ENCODE measurements at regions of chr5 and their contacts with region 1.

Region 1: DNA sequence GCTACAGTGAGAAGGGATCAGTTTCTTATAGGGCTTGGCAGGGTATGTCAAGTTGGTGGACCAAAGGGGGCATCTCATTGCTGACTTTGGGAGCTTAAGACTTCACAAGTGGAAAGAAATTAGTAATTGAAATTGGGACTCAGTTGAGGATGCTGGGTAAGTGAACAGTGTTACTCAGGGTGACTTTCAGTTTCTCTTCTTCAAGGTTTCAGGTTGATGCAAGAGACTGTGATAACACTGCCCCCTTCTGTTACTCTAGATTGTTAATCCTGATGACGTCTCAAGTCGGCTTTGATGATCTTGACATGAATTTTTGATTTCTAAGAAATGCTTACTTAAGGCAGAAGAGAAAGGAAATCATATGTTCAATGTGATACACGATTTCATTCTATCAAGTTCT is 21.3 kb downstream of the KCTD16 start:
- DNase-seq: peak; percentile 28
- H3K4me3 Mint-ChIP-seq: no peak overlapping the region
- H3K27ac Mint-ChIP-seq: no peak overlapping the region
- H3K4me1 Mint-ChIP-seq: no peaks in the 10 kb centered on the region
- H3K27me3 Mint-ChIP-seq: peaks cover 3% of the 10 kb centered on the region

Region 2: GRCh38 chr5:143002459-143003328 is 1189.3 kb before region 1 on chr5:
- CTCF ChIA-PET with region 1: interaction called, 15 read pairs
- POLR2A ChIA-PET with region 1: interaction called, 12 read pairs
- DNase-seq: peak; percentile 81
- H3K4me3 Mint-ChIP-seq: peak overlapping the region; percentile 41
- H3K27ac Mint-ChIP-seq: peak overlapping the region; percentile 99
- H3K4me1 Mint-ChIP-seq: peaks cover 76% of the 10 kb centered on the region
- H3K27me3 Mint-ChIP-seq: no peaks in the 10 kb centered on the region

Region 3: DNA sequence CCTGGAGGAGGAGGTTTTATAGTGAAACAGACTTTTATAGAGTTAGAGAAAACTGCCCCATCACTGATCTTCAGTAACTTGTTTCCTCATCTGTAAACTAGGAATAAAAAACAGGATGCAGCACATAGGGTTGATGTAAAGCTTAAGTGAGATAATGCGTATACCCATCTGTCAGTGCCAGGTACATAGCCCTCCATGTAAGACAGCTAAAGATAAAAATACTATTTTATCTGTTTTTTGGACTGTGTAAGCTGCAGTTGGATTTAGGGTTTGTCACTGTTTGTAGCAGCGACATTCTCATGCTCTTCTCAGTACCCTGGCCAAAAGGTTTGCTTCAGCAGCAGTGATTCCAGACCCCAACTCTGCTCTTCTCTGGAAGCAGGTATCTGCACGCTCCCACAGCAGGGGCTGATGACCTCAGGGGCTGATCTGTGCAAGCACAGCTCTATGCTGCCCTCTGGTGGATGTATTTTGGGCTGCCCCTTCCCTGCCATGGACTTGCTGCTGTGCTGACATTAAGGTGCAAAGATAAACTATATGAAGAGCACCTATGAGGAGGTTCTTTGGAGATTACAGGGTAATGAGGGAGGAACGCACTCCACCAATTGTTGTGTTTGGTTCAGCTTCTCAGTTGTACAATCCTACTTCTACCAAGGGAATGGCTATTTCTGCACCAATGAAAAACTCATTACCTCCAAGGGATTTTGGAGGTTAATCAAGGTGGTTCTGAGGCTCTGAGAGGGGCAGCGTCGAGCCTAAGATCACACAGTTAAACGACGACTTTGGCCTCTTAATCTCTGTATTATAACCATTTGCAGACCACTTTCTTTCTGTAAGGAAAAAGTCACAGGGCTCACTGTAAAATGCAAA is 366.9 kb before region 1 on chr5:
- CTCF ChIA-PET with region 1: interaction called, 24 read pairs
- POLR2A ChIA-PET with region 1: interaction called, 4 read pairs
- DNase-seq: peak; percentile 86
- H3K4me3 Mint-ChIP-seq: no peak overlapping the region
- H3K27ac Mint-ChIP-seq: no peak overlapping the region
- H3K4me1 Mint-ChIP-seq: peaks cover 20% of the 10 kb centered on the region
- H3K27me3 Mint-ChIP-seq: peaks cover 2% of the 10 kb centered on the region

Region 4: GRCh38 chr5:144170276-144171024 is 21.5 kb before region 1 on chr5 and contains the starts of genes KCTD16 and YIPF5:
- CTCF ChIA-PET with region 1: interaction called, 31 read pairs
- POLR2A ChIA-PET with region 1: interaction called, 104 read pairs
- DNase-seq: peak; percentile 98
- H3K4me3 Mint-ChIP-seq: peak within 1 kb of the TSS; percentile 99
- H3K27ac Mint-ChIP-seq: peak within 1 kb of the TSS; percentile 87
- H3K4me1 Mint-ChIP-seq: peaks cover 43% of the 10 kb centered on the region
- H3K27me3 Mint-ChIP-seq: peaks cover 9% of the 10 kb centered on the region
- total RNA-seq, gene KCTD16: not detected
- total RNA-seq, gene YIPF5: 45.1 to 47.5 TPM

Region 5: DNA sequence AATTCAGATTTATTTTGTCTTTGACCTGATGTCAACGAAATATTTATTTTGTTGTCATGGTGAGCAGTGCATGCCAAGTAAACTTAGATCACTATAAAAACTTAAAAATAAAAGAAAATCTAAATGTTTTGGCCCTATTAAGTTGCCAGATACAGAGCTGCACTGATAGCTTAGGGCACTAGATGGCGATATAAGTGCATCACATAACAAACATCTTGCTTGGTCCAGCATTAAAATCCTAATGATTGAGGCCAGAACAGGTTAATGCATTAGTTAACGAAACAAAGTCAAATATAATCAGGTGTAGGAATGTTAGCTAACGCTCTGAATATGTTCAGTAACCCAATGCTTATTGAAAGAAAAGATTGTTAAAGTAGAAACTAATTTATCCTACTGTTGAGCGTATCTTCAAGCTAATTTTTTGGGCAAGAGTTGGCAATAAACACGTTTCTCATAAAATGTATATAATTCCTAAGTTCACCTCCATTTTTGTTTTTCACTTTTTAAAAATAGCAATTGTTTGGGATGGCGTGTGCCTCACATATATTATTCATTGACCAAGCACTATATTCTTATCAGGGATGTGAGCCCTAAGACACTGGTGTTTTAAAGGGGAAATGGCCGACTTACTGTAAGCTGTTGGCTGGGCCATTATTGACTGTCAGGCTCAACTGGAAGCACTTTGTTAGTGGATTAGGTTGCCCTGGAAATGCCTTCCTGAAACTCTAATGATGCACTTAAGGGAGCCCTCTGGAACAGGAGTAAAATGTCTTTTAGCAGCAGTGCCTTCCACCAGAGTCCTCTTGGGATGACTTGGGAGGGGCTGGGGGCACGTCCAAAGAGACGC is 12.0 kb after region 1 on chr5:
- CTCF ChIA-PET with region 1: interaction called, 12 read pairs
- POLR2A ChIA-PET with region 1: interaction called, 4 read pairs
- DNase-seq: peak; percentile 23
- H3K4me3 Mint-ChIP-seq: no peak overlapping the region
- H3K27ac Mint-ChIP-seq: no peak overlapping the region
- H3K4me1 Mint-ChIP-seq: peaks cover 4% of the 10 kb centered on the region
- H3K27me3 Mint-ChIP-seq: peaks cover 56% of the 10 kb centered on the region

Measured in activated CD4-positive, alpha-beta memory T cell treated with anti-CD3 and anti-CD28 coated beads, Interleukin-2, amount 10 ng/mL, durations not matched to agents 7 days and 5 days (primary cell).